ENCODE measurements at regions of chr11 and their contacts with region 1.

Region 1: DNA sequence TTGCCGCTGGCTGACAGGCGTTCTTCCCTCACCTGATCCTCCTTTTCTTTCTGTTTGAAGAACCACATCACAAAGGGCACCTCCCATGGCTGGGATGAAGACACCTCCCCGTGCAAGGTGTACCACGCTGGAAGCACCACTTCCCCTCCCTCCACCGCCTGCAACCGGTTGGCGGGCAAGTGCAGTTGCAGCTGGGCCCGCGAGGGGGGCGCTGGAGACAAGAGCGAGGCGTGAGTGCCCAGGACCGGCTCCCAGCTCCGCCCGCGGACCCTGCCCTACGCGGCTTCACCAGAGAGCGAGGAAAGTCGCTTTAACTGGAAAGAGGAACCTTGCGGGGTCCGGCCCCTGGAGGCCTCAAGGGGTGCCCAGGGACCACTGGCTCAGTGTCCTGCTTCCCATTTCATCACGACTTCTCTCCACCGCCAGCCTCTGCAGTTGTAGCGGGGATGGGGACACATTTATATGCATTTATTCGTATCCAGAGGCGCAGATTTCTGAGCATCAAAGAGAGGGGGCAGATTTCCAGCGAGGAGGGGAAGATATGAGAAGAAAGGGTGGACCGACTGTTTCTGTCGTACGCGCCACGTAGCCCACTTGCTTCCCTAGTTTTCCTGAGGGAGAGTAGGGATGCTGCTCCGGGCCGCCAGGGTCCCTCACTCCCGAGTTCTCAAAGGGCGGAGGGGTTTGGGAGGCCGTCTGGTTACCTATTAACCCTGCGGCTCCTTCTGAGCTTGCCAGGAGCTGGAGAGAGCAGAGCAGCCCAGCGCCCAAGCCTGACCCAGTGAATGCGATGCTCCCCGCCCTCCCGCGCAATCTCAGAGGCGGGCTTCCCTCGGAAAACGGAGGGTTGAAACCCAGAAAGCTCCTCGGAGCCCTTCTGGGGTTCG is 3.5 kb downstream of the ESAM start:
- DNase-seq: peak in 8 of 9 donors; percentile 61 to 73 (median 66)
- ATAC-seq: peak; percentile 78
- H3K4me3 ChIP-seq: peak overlapping the region; percentile 27
- H3K4me3 Mint-ChIP-seq: peak overlapping the region; percentile 52 to 98 (median 76)
- H3K27ac ChIP-seq: no peak overlapping the region
- H3K27ac Mint-ChIP-seq: peak overlapping the region in 2 of 9 donors; percentile 38 to 41
- H3K4me1 ChIP-seq: peaks cover 8 to 31% of the 10 kb centered on the region in 2 donors
- H3K4me1 Mint-ChIP-seq: peaks cover 6 to 40% (median 24%) of the 10 kb centered on the region in 7 donors
- H3K27me3 ChIP-seq: peaks cover 7 to 16% of the 10 kb centered on the region in 2 donors
- H3K27me3 Mint-ChIP-seq: peaks cover 36 to 60% (median 53%) of the 10 kb centered on the region in 5 donors

Region 2: GRCh38 chr11:124644426-124645280 is 113.9 kb before region 1 on chr11:
- CTCF ChIA-PET with region 1: interaction called, 6 read pairs
- POLR2A ChIA-PET with region 1: no interaction called
- intact Hi-C with region 1: loop called (anchors 1 kb)
- DNase-seq: peak in 7 of 9 donors; percentile 6 to 28 (median 21)
- ATAC-seq: peak; percentile 88
- H3K4me3 ChIP-seq: no peak overlapping the region
- H3K4me3 Mint-ChIP-seq: no peak overlapping the region
- H3K27ac ChIP-seq: no peak overlapping the region
- H3K27ac Mint-ChIP-seq: no peak overlapping the region
- H3K4me1 ChIP-seq: no peaks in the 10 kb centered on the region
- H3K4me1 Mint-ChIP-seq: peaks cover 3 to 11% (median 5%) of the 10 kb centered on the region in 7 donors
- H3K27me3 ChIP-seq: no peaks in the 10 kb centered on the region
- H3K27me3 Mint-ChIP-seq: no peaks in the 10 kb centered on the region

Region 3: GRCh38 chr11:124793466-124794278 is 35.1 kb after region 1 on chr11:
- CTCF ChIA-PET with region 1: interaction called, 6 read pairs
- POLR2A ChIA-PET with region 1: interaction called, 9 read pairs
- intact Hi-C with region 1: loop called (anchors 1 kb)
- DNase-seq: peak in 6 of 9 donors; percentile 5 to 50 (median 40)
- ATAC-seq: peak; percentile 84
- H3K4me3 ChIP-seq: no peak overlapping the region
- H3K4me3 Mint-ChIP-seq: no peak overlapping the region
- H3K27ac ChIP-seq: no peak overlapping the region
- H3K27ac Mint-ChIP-seq: peak overlapping the region in 1 of 9 donors; percentile 2
- H3K4me1 ChIP-seq: peaks cover 2 to 3% of the 10 kb centered on the region in 2 donors
- H3K4me1 Mint-ChIP-seq: peaks cover 17 to 45% (median 41%) of the 10 kb centered on the region in 7 donors
- H3K27me3 ChIP-seq: no peaks in the 10 kb centered on the region
- H3K27me3 Mint-ChIP-seq: no peaks in the 10 kb centered on the region

Region 4: GRCh38 chr11:124865921-124866583 is 107.5 kb after region 1 on chr11:
- CTCF ChIA-PET with region 1: no interaction called
- POLR2A ChIA-PET with region 1: no interaction called
- intact Hi-C with region 1: loop called in 1 of 2 experiments (anchors 2 kb)
- DNase-seq: peak in 8 of 9 donors; percentile 27 to 61 (median 46)
- ATAC-seq: peak; percentile 72
- H3K4me3 ChIP-seq: no peak overlapping the region
- H3K4me3 Mint-ChIP-seq: peak overlapping the region in 7 of 10 donors; percentile 37 to 68 (median 51)
- H3K27ac ChIP-seq: no peak overlapping the region
- H3K27ac Mint-ChIP-seq: peak overlapping the region in 1 of 9 donors; percentile 54
- H3K4me1 ChIP-seq: peaks cover 5 to 29% of the 10 kb centered on the region in 2 donors
- H3K4me1 Mint-ChIP-seq: peaks cover 7 to 67% (median 43%) of the 10 kb centered on the region in 7 donors
- H3K27me3 ChIP-seq: peaks cover 20 to 70% of the 10 kb centered on the region in 2 donors
- H3K27me3 Mint-ChIP-seq: peaks cover 80 to 97% (median 91%) of the 10 kb centered on the region in 5 donors

Region 5: DNA sequence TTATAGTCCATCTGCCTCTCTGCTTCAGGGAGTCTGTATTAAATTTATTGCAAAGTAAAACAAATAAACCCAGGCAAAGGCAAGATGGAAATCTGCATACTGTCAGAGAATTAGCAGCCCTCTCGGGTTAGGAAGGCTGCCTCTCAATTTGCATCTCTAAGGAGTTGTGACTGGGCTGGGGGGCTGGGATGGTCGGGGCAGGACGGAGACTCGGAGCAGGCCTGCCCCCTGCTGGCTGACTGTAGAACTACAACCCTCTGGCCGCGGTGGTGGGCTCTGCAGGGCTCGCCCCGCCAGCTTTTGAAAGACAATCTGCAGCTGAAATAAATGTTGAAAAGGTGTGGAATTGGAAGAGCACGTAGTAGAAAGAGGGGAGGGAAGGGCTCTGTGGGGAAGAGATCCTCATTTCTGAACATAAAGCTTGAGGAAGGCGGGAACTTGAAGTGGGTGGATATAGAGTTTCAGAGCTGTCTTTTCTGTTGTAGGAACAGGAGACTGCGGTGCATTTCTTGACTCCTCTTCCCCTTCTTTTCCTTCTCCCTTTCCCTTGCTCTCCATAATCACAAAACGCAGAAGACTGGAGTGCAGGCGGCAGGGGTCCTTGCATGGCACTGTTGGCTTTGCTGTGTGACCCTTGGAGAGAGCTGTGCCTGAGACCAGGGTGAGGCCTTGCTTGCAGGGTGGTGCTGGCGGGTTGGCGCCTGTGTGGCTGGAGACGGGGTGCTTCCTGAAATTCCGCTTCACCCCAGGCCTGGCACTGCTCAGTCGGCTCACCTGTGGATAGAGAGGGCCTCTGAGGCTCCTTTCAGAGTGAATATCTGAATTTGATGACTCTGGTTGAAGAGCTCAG is 383.4 kb after region 1 on chr11:
- CTCF ChIA-PET with region 1: no interaction called
- POLR2A ChIA-PET with region 1: no interaction called
- intact Hi-C with region 1: loop called in 1 of 2 experiments (anchors 5 kb)
- DNase-seq: peak; percentile 21 to 73 (median 48)
- ATAC-seq: peak; percentile 95
- H3K4me3 ChIP-seq: no peak overlapping the region
- H3K4me3 Mint-ChIP-seq: peak overlapping the region in 3 of 10 donors; percentile 10 to 49 (median 20)
- H3K27ac ChIP-seq: no peak overlapping the region
- H3K27ac Mint-ChIP-seq: no peak overlapping the region
- H3K4me1 ChIP-seq: no peaks in the 10 kb centered on the region
- H3K4me1 Mint-ChIP-seq: peaks cover 0 to 6% (median 5%) of the 10 kb centered on the region in 7 donors
- H3K27me3 ChIP-seq: peaks cover 0 to 5% of the 10 kb centered on the region in 2 donors
- H3K27me3 Mint-ChIP-seq: peaks cover 15 to 47% (median 27%) of the 10 kb centered on the region in 5 donors

Measured in naive thymus-derived CD4-positive, alpha-beta T cell (primary cell).